Left cardiac atrium (tissue), 4 donors: ENCODE measurements at regions of chr9 and their contacts with region 1.

Region 1: GRCh38 chr9:91803151-91803940 is 146.7 kb downstream of the ROR2 start:
- DNase-seq: no peak
- ATAC-seq: no peak

Region 2: DNA sequence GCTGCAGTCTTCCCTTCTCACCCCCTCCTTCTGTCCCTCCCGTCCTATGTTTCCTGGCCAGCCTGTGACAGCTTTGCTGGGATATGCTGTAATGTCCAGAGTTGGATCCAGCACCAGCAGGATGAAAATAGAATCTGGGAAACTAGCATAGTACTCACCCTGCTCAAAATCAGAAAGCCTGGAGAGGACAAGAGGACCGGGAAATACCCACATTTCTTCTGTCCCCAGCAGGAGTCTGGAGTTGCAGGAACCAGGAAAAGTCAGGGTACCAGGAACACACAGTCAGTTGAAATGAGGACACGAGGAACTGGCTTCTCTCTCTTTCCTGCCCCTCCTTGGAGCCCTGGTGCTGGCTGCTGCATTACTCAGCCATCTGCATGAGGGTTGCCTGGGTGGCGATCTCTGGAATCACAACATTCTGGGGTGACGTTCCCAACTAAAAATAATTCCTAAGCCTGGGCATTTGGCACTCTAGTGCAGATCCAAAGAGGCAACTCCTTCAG is 320.1 kb before region 1 on chr9:
- intact Hi-C with region 1: no loop called
- DNase-seq: peak; percentile 58
- ATAC-seq: peak; percentile 89 to 90

Region 3: DNA sequence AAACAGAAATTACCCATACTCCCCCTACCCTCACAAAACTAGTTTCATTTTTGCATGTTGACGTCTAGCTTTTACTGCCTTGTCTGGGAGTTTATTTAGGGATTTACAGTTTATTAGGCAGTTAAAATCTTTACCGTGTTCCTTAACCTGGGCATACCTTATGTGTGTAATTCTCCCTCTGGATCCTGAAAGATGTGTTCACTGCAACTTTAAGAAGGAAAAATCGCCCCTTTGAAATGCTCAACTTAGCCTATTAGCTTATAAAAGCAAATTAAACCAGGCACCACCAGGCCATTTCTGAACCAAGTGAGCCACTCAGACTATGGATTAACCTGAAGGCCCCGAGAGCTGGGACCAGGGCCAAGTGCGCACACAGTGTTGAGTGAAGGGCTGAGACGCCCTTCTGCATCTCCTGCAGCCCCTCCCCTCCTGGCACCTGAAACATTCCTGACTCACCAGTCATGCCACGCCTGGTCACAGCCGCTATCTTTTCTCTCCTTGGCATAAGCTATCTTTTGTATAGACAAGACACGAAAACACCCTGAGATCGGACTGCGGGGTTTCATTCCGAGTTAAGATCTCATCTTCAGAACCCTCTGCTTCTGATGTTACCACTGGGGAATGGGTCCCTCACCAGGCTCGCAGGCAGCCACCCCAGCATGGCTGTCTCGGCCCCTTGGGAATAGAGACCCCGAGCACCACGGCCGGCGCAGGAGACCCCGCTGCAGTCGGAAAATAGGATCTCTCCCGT is 34.8 kb after region 1 on chr9:
- intact Hi-C with region 1: loop called in 1 of 2 experiments (anchors 5 kb)
- DNase-seq: peak; percentile 86
- ATAC-seq: peak; percentile 83 to 92

Region 4: DNA sequence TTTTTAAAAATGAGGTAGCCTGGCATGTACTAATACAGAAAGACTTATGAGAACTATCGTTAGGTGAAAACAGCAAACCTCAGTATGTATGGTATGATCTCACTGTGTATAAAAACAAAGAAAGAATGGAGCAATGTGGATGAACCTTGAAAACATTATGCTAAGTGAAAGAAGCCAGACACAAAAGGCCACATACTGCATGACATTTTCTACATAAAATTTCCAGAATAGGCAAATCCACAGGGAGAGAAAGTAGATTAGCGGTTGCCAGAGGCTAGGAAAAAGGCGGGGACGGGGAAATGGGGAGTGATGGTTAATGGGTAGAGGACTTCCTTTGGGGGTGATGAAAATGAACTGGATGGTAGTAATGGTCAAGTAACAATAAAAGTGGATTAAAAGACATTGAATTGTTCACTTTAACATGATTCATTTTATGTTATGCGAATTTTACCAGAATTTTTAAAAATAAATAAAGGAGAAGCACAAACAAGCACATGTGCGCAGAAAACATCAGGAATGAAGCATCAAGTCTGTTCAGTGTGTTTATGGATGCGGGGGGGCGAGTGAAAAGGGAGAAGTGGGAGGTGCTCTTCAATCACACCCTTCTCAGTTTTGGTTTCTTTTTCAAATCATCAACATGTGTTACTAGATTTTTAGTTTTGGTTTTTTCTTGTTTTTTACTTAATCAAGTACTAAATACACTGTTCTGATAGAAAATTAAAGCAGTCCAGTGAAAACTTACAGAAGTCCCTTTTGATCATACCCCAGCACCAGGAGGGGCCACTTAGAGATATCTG is 130.4 kb after region 1 on chr9:
- intact Hi-C with region 1: loop called in 1 of 2 experiments (anchors 2 kb)
- DNase-seq: no peak
- ATAC-seq: no peak